ENCODE measurements at regions of chr12 and their contacts with region 1.

Region 1: GRCh38 chr12:102939670-102940222 is 17.7 kb upstream of the ASCL1 start:
- DNase-seq: no peak
- H3K4me3 Mint-ChIP-seq: no peak overlapping the region
- H3K27ac Mint-ChIP-seq: no peak overlapping the region
- H3K4me1 Mint-ChIP-seq: no peaks in the 10 kb centered on the region
- H3K27me3 Mint-ChIP-seq: peaks cover 11% of the 10 kb centered on the region

Region 2: GRCh38 chr12:102833687-102834445 is 105.9 kb before region 1 on chr12:
- CTCF ChIA-PET with region 1: no interaction called
- DNase-seq: no peak
- H3K4me3 Mint-ChIP-seq: no peak overlapping the region
- H3K27ac Mint-ChIP-seq: no peak overlapping the region
- H3K4me1 Mint-ChIP-seq: no peaks in the 10 kb centered on the region
- H3K27me3 Mint-ChIP-seq: no peaks in the 10 kb centered on the region

Region 3: GRCh38 chr12:102847131-102847530 is 92.6 kb before region 1 on chr12:
- CTCF ChIA-PET with region 1: no interaction called
- DNase-seq: no peak
- H3K4me3 Mint-ChIP-seq: no peak overlapping the region
- H3K27ac Mint-ChIP-seq: no peak overlapping the region
- H3K4me1 Mint-ChIP-seq: no peaks in the 10 kb centered on the region
- H3K27me3 Mint-ChIP-seq: no peaks in the 10 kb centered on the region

Region 4: DNA sequence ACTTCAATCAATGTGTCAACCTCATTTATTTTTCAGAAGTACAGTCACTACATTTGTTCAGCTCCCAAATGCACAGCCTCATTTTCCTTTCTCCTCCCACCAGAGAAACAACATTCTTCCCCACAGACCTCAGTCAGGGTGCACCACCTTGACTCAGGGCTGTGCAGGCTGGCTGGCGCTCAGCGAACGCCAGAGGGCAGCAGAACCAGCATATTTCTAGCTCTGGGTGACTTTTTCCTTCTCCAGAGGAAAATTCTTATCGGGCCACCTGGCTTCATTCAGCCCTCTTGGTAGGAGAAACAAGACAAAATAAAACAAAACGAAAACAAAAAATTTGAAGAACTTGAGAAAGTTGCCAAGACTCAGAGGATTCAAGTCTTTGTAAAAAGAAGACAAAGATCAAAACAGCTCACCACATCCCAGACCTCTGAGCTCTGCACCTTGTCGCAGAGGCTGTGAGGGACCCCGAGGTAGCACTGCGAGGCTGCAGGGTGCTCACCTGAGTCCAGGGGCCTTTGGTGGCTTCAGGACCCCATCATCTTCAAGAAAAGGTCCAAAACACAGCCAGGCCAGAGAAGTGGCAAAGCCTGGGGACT is 56.4 kb before region 1 on chr12:
- CTCF ChIA-PET with region 1: interaction called, 10 read pairs
- DNase-seq: peak; percentile 50
- H3K4me3 Mint-ChIP-seq: no peak overlapping the region
- H3K27ac Mint-ChIP-seq: no peak overlapping the region
- H3K4me1 Mint-ChIP-seq: no peaks in the 10 kb centered on the region
- H3K27me3 Mint-ChIP-seq: peaks cover 4% of the 10 kb centered on the region

Region 5: DNA sequence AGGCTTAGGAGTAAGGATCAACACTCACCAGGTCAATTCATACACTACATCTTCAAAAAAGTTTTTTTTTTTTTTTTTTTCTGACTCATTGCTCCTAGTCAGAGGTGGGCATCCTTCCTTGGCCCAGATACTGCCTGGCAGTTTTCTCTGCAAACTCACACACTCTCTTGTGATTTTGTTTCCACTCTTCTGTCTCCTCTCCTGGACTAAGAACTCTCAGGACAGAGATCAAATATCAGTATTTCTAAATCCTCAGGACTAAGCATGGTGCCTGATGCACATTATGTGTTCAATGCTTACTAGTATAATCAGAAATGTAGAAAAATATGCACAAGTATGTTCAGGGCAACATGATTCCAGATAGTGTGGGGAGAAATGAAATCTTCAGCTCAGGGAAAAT is 12.5 kb before region 1 on chr12:
- CTCF ChIA-PET with region 1: no interaction called
- DNase-seq: no peak
- H3K4me3 Mint-ChIP-seq: no peak overlapping the region
- H3K27ac Mint-ChIP-seq: no peak overlapping the region
- H3K4me1 Mint-ChIP-seq: no peaks in the 10 kb centered on the region
- H3K27me3 Mint-ChIP-seq: no peaks in the 10 kb centered on the region